CD8-positive, alpha-beta T cell (primary cell): ENCODE measurements at regions of chr18 and their contacts with region 1.

Region 1: GRCh38 chr18:3454365-3455089 is 4.6 kb downstream of the TGIF1 start:
- DNase-seq: peak in 6 of 9 experiments; percentile 23 to 79 (median 37)
- ATAC-seq: no peak
- H3K4me3 ChIP-seq: peak overlapping the region; percentile 30 to 42
- H3K4me3 Mint-ChIP-seq: peak overlapping the region; percentile 92
- H3K27ac ChIP-seq: peak overlapping the region; percentile 38 to 100
- H3K27ac Mint-ChIP-seq: peak overlapping the region; percentile 100
- H3K4me1 ChIP-seq: peaks cover 21% of the 10 kb centered on the region
- H3K4me1 Mint-ChIP-seq: peaks cover 61% of the 10 kb centered on the region
- H3K27me3 ChIP-seq: no peaks in the 10 kb centered on the region
- H3K27me3 Mint-ChIP-seq: no peaks in the 10 kb centered on the region
- CTCF ChIP-seq: peak; percentile 87

Region 2: GRCh38 chr18:2978646-2979045 is 475.9 kb before region 1 on chr18:
- CTCF ChIA-PET with region 1: no interaction called
- POLR2A ChIA-PET with region 1: no interaction called
- intact Hi-C with region 1: no loop called
- DNase-seq: peak in 3 of 9 experiments; percentile 47 to 68 (median 55)
- ATAC-seq: peak; percentile 21
- H3K4me3 ChIP-seq: peak overlapping the region; percentile 19 to 22
- H3K4me3 Mint-ChIP-seq: peak overlapping the region; percentile 81
- H3K27ac ChIP-seq: peak overlapping the region; percentile 25 to 87
- H3K27ac Mint-ChIP-seq: peak overlapping the region; percentile 92
- H3K4me1 ChIP-seq: peaks cover 61% of the 10 kb centered on the region
- H3K4me1 Mint-ChIP-seq: peaks cover 77% of the 10 kb centered on the region
- H3K27me3 ChIP-seq: no peaks in the 10 kb centered on the region
- H3K27me3 Mint-ChIP-seq: no peaks in the 10 kb centered on the region
- CTCF ChIP-seq: no peak

Region 3: GRCh38 chr18:3297025-3297984 is 157.2 kb before region 1 on chr18:
- CTCF ChIA-PET with region 1: interaction called, 39 read pairs
- POLR2A ChIA-PET with region 1: interaction called, 37 read pairs
- intact Hi-C with region 1: loop called (anchors 1 kb)
- DNase-seq: peak; percentile 86 to 95 (median 93)
- ATAC-seq: peak; percentile 98
- H3K4me3 ChIP-seq: peak overlapping the region; percentile 71 to 87
- H3K4me3 Mint-ChIP-seq: peak overlapping the region; percentile 92
- H3K27ac ChIP-seq: peak overlapping the region; percentile 51 to 58
- H3K27ac Mint-ChIP-seq: peak overlapping the region; percentile 86
- H3K4me1 ChIP-seq: peaks cover 7% of the 10 kb centered on the region
- H3K4me1 Mint-ChIP-seq: peaks cover 8% of the 10 kb centered on the region
- H3K27me3 ChIP-seq: peaks cover 0 to 2% of the 10 kb centered on the region in 2 experiments
- H3K27me3 Mint-ChIP-seq: peaks cover 27% of the 10 kb centered on the region
- CTCF ChIP-seq: peak; percentile 79

Region 4: GRCh38 chr18:3380384-3380961 is 74.1 kb before region 1 on chr18:
- CTCF ChIA-PET with region 1: interaction called, 7 read pairs
- POLR2A ChIA-PET with region 1: no interaction called
- intact Hi-C with region 1: loop called (anchors 2 kb)
- DNase-seq: peak in 2 of 9 experiments; percentile 51 to 61
- ATAC-seq: peak; percentile 58
- H3K4me3 ChIP-seq: no peak overlapping the region
- H3K4me3 Mint-ChIP-seq: no peak overlapping the region
- H3K27ac ChIP-seq: no peak overlapping the region
- H3K27ac Mint-ChIP-seq: no peak overlapping the region
- H3K4me1 ChIP-seq: no peaks in the 10 kb centered on the region
- H3K4me1 Mint-ChIP-seq: no peaks in the 10 kb centered on the region
- H3K27me3 ChIP-seq: no peaks in the 10 kb centered on the region
- H3K27me3 Mint-ChIP-seq: peaks cover 4% of the 10 kb centered on the region
- CTCF ChIP-seq: peak; percentile 21

Region 5: DNA sequence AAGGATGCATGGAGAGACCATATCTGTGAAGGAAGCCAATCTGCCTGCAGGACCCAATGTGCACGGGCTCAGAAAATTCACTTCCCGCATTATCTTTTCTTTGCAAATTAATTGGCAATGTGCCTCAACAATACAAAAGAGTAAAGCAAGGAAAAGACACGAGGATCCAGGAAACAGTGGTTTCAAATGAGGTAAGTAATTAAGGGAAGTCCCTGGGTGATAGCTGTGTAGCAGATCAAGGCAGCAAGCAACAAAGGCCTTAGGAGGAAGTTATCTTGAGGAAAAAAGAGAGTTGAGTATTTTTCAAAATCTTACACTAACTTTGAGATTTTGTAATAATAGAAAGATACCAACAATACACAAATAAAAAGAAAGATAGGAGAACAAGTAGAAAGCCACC is 48.8 kb before region 1 on chr18:
- CTCF ChIA-PET with region 1: no interaction called
- POLR2A ChIA-PET with region 1: no interaction called
- intact Hi-C with region 1: no loop called
- DNase-seq: peak in 1 of 9 experiments; percentile 38
- ATAC-seq: no peak
- H3K4me3 ChIP-seq: no peak overlapping the region
- H3K4me3 Mint-ChIP-seq: no peak overlapping the region
- H3K27ac ChIP-seq: no peak overlapping the region
- H3K27ac Mint-ChIP-seq: no peak overlapping the region
- H3K4me1 ChIP-seq: peaks cover 10% of the 10 kb centered on the region
- H3K4me1 Mint-ChIP-seq: peaks cover 17% of the 10 kb centered on the region
- H3K27me3 ChIP-seq: no peaks in the 10 kb centered on the region
- H3K27me3 Mint-ChIP-seq: no peaks in the 10 kb centered on the region
- CTCF ChIP-seq: no peak

Region 6: GRCh38 chr18:3466045-3466444 is 11.5 kb after region 1 on chr18:
- CTCF ChIA-PET with region 1: interaction called, 30 read pairs
- POLR2A ChIA-PET with region 1: interaction called, 34 read pairs
- intact Hi-C with region 1: no loop called
- DNase-seq: no peak
- ATAC-seq: no peak
- H3K4me3 ChIP-seq: no peak overlapping the region
- H3K4me3 Mint-ChIP-seq: no peak overlapping the region
- H3K27ac ChIP-seq: no peak overlapping the region
- H3K27ac Mint-ChIP-seq: no peak overlapping the region
- H3K4me1 ChIP-seq: peaks cover 16% of the 10 kb centered on the region
- H3K4me1 Mint-ChIP-seq: peaks cover 20% of the 10 kb centered on the region
- H3K27me3 ChIP-seq: no peaks in the 10 kb centered on the region
- H3K27me3 Mint-ChIP-seq: no peaks in the 10 kb centered on the region
- CTCF ChIP-seq: no peak

Region 7: GRCh38 chr18:3585656-3586509 is 131.4 kb after region 1 on chr18:
- CTCF ChIA-PET with region 1: interaction called, 35 read pairs
- POLR2A ChIA-PET with region 1: interaction called, 7 read pairs
- intact Hi-C with region 1: loop called in 1 of 2 experiments (anchors 2 kb)
- DNase-seq: peak in 8 of 9 experiments; percentile 40 to 83 (median 66)
- ATAC-seq: peak; percentile 87
- H3K4me3 ChIP-seq: no peak overlapping the region
- H3K4me3 Mint-ChIP-seq: no peak overlapping the region
- H3K27ac ChIP-seq: no peak overlapping the region
- H3K27ac Mint-ChIP-seq: no peak overlapping the region
- H3K4me1 ChIP-seq: no peaks in the 10 kb centered on the region
- H3K4me1 Mint-ChIP-seq: peaks cover 8% of the 10 kb centered on the region
- H3K27me3 ChIP-seq: no peaks in the 10 kb centered on the region
- H3K27me3 Mint-ChIP-seq: no peaks in the 10 kb centered on the region
- CTCF ChIP-seq: peak; percentile 56